ENCODE measurements at regions of chr5 and their contacts with region 1.

Region 1: GRCh38 chr5:62376064-62376463 is 27.6 kb downstream of the DIMT1 start:
- DNase-seq: no peak
- ATAC-seq: no peak
- H3K4me3 ChIP-seq: no peak overlapping the region
- H3K4me3 Mint-ChIP-seq: no peak overlapping the region
- H3K27ac ChIP-seq: no peak overlapping the region
- H3K27ac Mint-ChIP-seq: peak overlapping the region in 1 of 9 donors; percentile 43
- H3K4me1 ChIP-seq: no peaks in the 10 kb centered on the region
- H3K4me1 Mint-ChIP-seq: peaks cover 0 to 5% (median 0%) of the 10 kb centered on the region in 7 donors
- H3K27me3 ChIP-seq: no peaks in the 10 kb centered on the region
- H3K27me3 Mint-ChIP-seq: no peaks in the 10 kb centered on the region

Region 2: GRCh38 chr5:62362701-62363100 is 13.4 kb before region 1 on chr5:
- CTCF ChIA-PET with region 1: no interaction called
- POLR2A ChIA-PET with region 1: no interaction called
- intact Hi-C with region 1: loop called in 1 of 2 experiments (anchors 2 kb)
- DNase-seq: no peak
- ATAC-seq: no peak
- H3K4me3 ChIP-seq: no peak overlapping the region
- H3K4me3 Mint-ChIP-seq: no peak overlapping the region
- H3K27ac ChIP-seq: no peak overlapping the region
- H3K27ac Mint-ChIP-seq: no peak overlapping the region
- H3K4me1 ChIP-seq: no peaks in the 10 kb centered on the region
- H3K4me1 Mint-ChIP-seq: peaks cover 0 to 9% (median 0%) of the 10 kb centered on the region in 7 donors
- H3K27me3 ChIP-seq: no peaks in the 10 kb centered on the region
- H3K27me3 Mint-ChIP-seq: no peaks in the 10 kb centered on the region

Region 3: GRCh38 chr5:62386824-62387223 is 10.8 kb after region 1 on chr5:
- CTCF ChIA-PET with region 1: no interaction called
- POLR2A ChIA-PET with region 1: interaction called, 3 read pairs
- intact Hi-C with region 1: loop called in 1 of 2 experiments (anchors 2 kb)
- DNase-seq: no peak
- ATAC-seq: no peak
- H3K4me3 ChIP-seq: no peak overlapping the region
- H3K4me3 Mint-ChIP-seq: no peak overlapping the region
- H3K27ac ChIP-seq: no peak overlapping the region
- H3K27ac Mint-ChIP-seq: peak overlapping the region in 5 of 9 donors; percentile 14 to 40 (median 36)
- H3K4me1 ChIP-seq: no peaks in the 10 kb centered on the region
- H3K4me1 Mint-ChIP-seq: peaks cover 0 to 19% (median 0%) of the 10 kb centered on the region in 7 donors
- H3K27me3 ChIP-seq: no peaks in the 10 kb centered on the region
- H3K27me3 Mint-ChIP-seq: no peaks in the 10 kb centered on the region

Region 4: GRCh38 chr5:62395210-62395950 is 19.3 kb after region 1 on chr5:
- CTCF ChIA-PET with region 1: no interaction called
- POLR2A ChIA-PET with region 1: interaction called, 4 read pairs
- intact Hi-C with region 1: loop called in 1 of 2 experiments (anchors 2 kb)
- DNase-seq: no peak
- ATAC-seq: no peak
- H3K4me3 ChIP-seq: no peak overlapping the region
- H3K4me3 Mint-ChIP-seq: no peak overlapping the region
- H3K27ac ChIP-seq: no peak overlapping the region
- H3K27ac Mint-ChIP-seq: peak overlapping the region in 4 of 9 donors; percentile 48 to 71 (median 53)
- H3K4me1 ChIP-seq: no peaks in the 10 kb centered on the region
- H3K4me1 Mint-ChIP-seq: peaks cover 4 to 27% (median 6%) of the 10 kb centered on the region in 7 donors
- H3K27me3 ChIP-seq: no peaks in the 10 kb centered on the region
- H3K27me3 Mint-ChIP-seq: no peaks in the 10 kb centered on the region

Measured in naive thymus-derived CD4-positive, alpha-beta T cell (primary cell).